Activated T-helper 1 cell treated with anti-CD3 and anti-CD28 coated beads, Interleukin-12 subunit alpha, Interleukin-12 subunit beta, Interleukin-2, Interleukin-4 antibody, amounts not matched to agents 30 ng/mL and 10 ng/mL and 1 ng/mL, durations not matched to agents 14 hours and 24 hours and 36 hours (primary cell): ENCODE measurements at regions of chr1 and their contacts with region 1.

Region 1: GRCh38 chr1:19661721-19662228 is 2.9 kb upstream of the HTR6 start:
- DNase-seq: no peak
- H3K4me3 Mint-ChIP-seq: no peak overlapping the region
- H3K27ac Mint-ChIP-seq: no peak overlapping the region
- H3K4me1 Mint-ChIP-seq: peaks cover 12% of the 10 kb centered on the region
- H3K27me3 Mint-ChIP-seq: peaks cover 41% of the 10 kb centered on the region

Region 2: GRCh38 chr1:19445417-19446342 is 216.1 kb before region 1 on chr1:
- intact Hi-C with region 1: no loop called
- DNase-seq: no peak
- H3K4me3 Mint-ChIP-seq: no peak overlapping the region
- H3K27ac Mint-ChIP-seq: peak overlapping the region; percentile 69
- H3K4me1 Mint-ChIP-seq: peaks cover 74% of the 10 kb centered on the region
- H3K27me3 Mint-ChIP-seq: no peaks in the 10 kb centered on the region

Region 3: DNA sequence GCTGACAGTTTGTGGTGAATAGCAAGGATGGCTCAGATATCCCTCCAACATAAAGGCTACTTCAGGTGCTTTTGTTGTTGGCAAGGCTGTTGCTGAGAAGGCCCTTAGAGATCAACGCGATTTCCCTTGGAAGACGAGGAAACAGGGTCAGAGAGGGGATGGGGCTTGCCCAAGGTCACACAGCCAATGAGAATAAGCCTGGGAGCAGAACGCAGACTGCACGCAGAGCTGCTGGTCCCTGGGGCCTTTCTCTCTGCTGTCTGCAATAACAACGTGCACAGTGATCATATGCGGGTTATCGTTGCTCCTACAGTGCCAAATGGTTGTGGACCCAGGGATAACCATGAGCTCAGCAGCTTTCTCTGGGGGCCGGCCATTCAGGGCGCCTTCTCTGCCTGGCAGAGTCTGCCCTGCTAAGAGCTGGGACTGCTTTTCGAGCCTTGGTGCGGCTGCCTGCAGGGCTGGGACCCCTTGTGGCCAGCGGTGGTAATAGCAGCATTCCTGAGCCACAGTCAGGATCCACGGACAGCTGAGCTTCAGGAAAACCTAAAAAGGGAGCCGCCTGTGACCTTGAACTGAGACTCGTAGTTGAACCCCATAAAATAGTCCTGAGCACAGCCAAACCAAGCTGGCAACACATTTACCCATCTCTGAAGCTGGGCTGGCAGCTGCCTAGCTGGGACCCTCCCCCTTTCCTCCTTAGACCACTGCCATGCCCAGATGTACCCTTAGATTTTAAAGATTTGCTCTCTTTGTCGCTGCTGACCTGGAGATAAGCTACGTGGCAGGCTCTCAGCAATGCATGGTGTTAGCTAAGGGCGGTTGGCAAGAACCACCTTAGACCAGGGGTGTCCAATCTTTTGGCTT is 42.7 kb after region 1 on chr1:
- intact Hi-C with region 1: loop called (anchors 1 kb)
- DNase-seq: no peak
- H3K4me3 Mint-ChIP-seq: no peak overlapping the region
- H3K27ac Mint-ChIP-seq: no peak overlapping the region
- H3K4me1 Mint-ChIP-seq: no peaks in the 10 kb centered on the region
- H3K27me3 Mint-ChIP-seq: no peaks in the 10 kb centered on the region

Region 4: GRCh38 chr1:19811206-19811851 is 149.6 kb after region 1 on chr1:
- intact Hi-C with region 1: loop called (anchors 1 kb)
- DNase-seq: peak; percentile 13
- H3K4me3 Mint-ChIP-seq: no peak overlapping the region
- H3K27ac Mint-ChIP-seq: no peak overlapping the region
- H3K4me1 Mint-ChIP-seq: no peaks in the 10 kb centered on the region
- H3K27me3 Mint-ChIP-seq: peaks cover 2% of the 10 kb centered on the region